Activated CD8-positive, alpha-beta memory T cell treated with anti-CD3 and anti-CD28 coated beads, Interleukin-2, amount 10 ng/mL, durations not matched to agents 7 days and 5 days (primary cell): ENCODE measurements at regions of chr19 and their contacts with region 1.

Region 1: GRCh38 chr19:3102228-3103140 is 8.3 kb downstream of the GNA11 start:
- DNase-seq: no peak
- ATAC-seq: no peak
- H3K4me3 Mint-ChIP-seq: no peak overlapping the region
- H3K27ac Mint-ChIP-seq: no peak overlapping the region
- H3K4me1 Mint-ChIP-seq: peaks cover 12% of the 10 kb centered on the region
- H3K27me3 Mint-ChIP-seq: peaks cover 25% of the 10 kb centered on the region

Region 2: GRCh38 chr19:2977001-2977685 is 125.3 kb before region 1 on chr19 and contains the start of gene TLE6:
- CTCF ChIA-PET with region 1: interaction called, 18 read pairs
- DNase-seq: peak; percentile 98
- ATAC-seq: peak; percentile 100
- H3K4me3 Mint-ChIP-seq: peak within 1 kb of the TSS; percentile 84
- H3K27ac Mint-ChIP-seq: peak within 1 kb of the TSS; percentile 87
- H3K4me1 Mint-ChIP-seq: peaks cover 22% of the 10 kb centered on the region
- H3K27me3 Mint-ChIP-seq: peaks cover 15% of the 10 kb centered on the region
- total RNA-seq, gene TLE6: 1.9 to 3.2 TPM

Region 3: DNA sequence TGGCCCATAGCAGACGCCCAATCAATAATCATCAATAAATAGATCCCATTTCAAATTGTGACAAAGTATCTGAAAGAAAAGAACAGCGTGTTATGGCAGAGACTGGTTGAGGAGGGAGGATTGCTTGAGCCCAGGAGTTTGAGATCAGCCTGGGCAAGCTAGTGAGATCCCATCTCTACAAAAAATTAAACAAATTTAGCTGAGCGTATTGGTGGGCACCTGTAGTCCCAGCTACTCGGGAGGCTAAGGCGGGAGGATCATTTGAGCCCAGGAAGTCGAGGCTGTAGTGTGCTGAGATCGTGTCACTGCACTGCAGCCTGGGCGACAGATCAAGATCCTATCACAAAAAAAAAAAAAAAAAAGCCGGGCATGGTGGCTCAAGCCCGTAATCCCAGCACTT is 14.7 kb before region 1 on chr19:
- CTCF ChIA-PET with region 1: interaction called, 22 read pairs
- DNase-seq: no peak
- ATAC-seq: no peak
- H3K4me3 Mint-ChIP-seq: no peak overlapping the region
- H3K27ac Mint-ChIP-seq: no peak overlapping the region
- H3K4me1 Mint-ChIP-seq: no peaks in the 10 kb centered on the region
- H3K27me3 Mint-ChIP-seq: peaks cover 9% of the 10 kb centered on the region

Region 4: GRCh38 chr19:3132971-3133792 is 30.7 kb after region 1 on chr19:
- CTCF ChIA-PET with region 1: interaction called, 51 read pairs
- DNase-seq: peak; percentile 94
- ATAC-seq: peak; percentile 93
- H3K4me3 Mint-ChIP-seq: peak overlapping the region; percentile 57
- H3K27ac Mint-ChIP-seq: peak overlapping the region; percentile 94
- H3K4me1 Mint-ChIP-seq: peaks cover 50% of the 10 kb centered on the region
- H3K27me3 Mint-ChIP-seq: peaks cover 2% of the 10 kb centered on the region